ENCODE measurements at regions of chr1 and their contacts with region 1.

Region 1: DNA sequence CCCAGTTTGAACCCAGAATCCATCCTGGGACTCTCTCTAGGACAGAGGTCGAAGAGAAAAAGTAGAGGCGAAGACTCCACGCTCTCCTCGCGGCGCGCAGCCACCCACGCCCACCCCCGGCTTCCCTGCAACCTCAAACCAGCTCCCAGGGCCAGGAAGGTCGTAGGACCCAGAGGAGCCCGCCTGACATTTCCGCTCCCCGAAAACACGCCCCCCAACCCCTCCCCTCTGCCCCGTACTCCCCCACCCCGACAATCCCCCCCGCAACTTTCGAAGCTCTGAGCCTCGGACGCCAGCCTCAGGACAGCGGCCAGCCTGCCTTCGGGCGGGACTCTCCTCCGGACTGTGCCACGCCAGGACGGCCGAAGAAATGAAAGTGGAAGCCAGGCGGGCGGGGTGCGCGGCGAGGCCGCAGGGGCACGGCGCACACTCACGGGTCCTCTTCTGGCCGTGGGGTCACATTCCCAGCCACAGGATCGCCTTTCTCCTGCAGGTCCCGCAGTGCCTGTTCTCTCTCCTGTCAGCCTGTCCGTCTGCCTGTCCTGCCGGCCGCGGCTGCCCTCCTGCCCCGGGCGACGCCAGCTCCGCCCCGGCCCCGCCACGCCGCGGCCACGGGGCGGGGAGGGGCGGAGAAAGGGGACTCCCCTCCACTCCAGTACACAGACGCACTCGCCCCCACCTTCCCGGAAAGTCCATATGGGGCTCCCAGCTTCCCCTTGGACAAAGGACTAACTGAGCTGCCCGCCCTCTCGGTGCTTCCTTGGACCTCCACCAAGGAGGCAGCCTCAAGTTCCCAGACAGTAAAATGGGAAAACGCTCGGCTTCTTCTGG is at the start of gene MOB3C:
- DNase-seq: peak; percentile 88 to 94
- ATAC-seq: peak; percentile 89 to 93 (median 92)
- H3K4me3 ChIP-seq: peak within 1 kb of the TSS; percentile 43 to 95 (median 84)
- H3K27ac ChIP-seq: peak within 1 kb of the TSS; percentile 56 to 98 (median 92)
- H3K4me1 ChIP-seq: peaks cover 25 to 54% (median 51%) of the 10 kb centered on the region in 9 donors
- H3K27me3 ChIP-seq: no peaks in the 10 kb centered on the region
- CTCF ChIP-seq: no peak
- total RNA-seq, gene MOB3C: 8.6 to 16.9 (median 12.2) TPM

Region 2: GRCh38 chr1:45001011-45001481 is 1615.4 kb before region 1 on chr1:
- intact Hi-C with region 1: no loop called
- DNase-seq: no peak
- ATAC-seq: peak in 7 of 8 donors; percentile 20 to 69 (median 37)
- H3K4me3 ChIP-seq: no peak overlapping the region
- H3K27ac ChIP-seq: peak overlapping the region in 1 of 10 donors; percentile 46
- H3K4me1 ChIP-seq: peaks cover 0 to 12% (median 0%) of the 10 kb centered on the region in 9 donors
- H3K27me3 ChIP-seq: no peaks in the 10 kb centered on the region
- CTCF ChIP-seq: no peak

Region 3: DNA sequence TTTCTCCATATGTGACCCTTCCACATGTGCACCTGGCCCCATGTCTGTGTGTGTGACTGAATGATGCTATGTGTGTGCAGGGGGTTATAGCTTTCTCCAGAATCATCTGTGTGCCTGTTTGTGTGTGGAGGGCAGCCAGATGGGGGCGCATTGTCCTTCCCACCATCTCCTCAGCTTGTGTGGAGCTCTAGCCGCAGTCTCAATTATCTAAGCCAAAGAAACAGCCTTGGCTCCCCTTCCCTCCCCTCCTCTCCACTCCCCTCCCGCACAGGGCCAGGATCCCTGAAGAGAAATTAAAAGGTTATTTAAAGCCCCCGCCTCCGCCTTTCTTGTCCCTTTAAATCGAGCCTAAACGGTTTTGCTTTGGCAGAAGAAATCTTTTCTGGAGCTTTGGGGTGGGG is 128.7 kb before region 1 on chr1:
- intact Hi-C with region 1: no loop called
- DNase-seq: no peak
- ATAC-seq: no peak
- H3K4me3 ChIP-seq: no peak overlapping the region
- H3K27ac ChIP-seq: no peak overlapping the region
- H3K4me1 ChIP-seq: peaks cover 4 to 26% (median 19%) of the 10 kb centered on the region in 9 donors
- H3K27me3 ChIP-seq: peaks cover 37 to 100% (median 99%) of the 10 kb centered on the region in 7 donors
- CTCF ChIP-seq: peak in 1 of 9 donors; percentile 19

Region 4: GRCh38 chr1:46718727-46719622 is 102.5 kb after region 1 on chr1 and contains the start of gene EFCAB14:
- intact Hi-C with region 1: loop called in 5 of 10 experiments (anchors 5 to 10 kb)
- DNase-seq: peak; percentile 95 to 98
- ATAC-seq: peak; percentile 99 to 100 (median 99)
- H3K4me3 ChIP-seq: peak within 1 kb of the TSS; percentile 70 to 98 (median 86)
- H3K27ac ChIP-seq: peak within 1 kb of the TSS; percentile 46 to 94 (median 82)
- H3K4me1 ChIP-seq: peaks cover 12 to 43% (median 32%) of the 10 kb centered on the region in 9 donors
- H3K27me3 ChIP-seq: no peaks in the 10 kb centered on the region
- CTCF ChIP-seq: peak in 1 of 9 donors; percentile 8
- total RNA-seq, gene EFCAB14: 46.0 to 74.5 (median 63.2) TPM